Calu3 (cell line): ENCODE measurements at regions of chr6 and their contacts with region 1.

Region 1: GRCh38 chr6:17156112-17156921 is 54.5 kb downstream of the STMND1 start:
- DNase-seq: peak; percentile 64
- H3K4me3 Mint-ChIP-seq: no peak overlapping the region
- H3K27ac Mint-ChIP-seq: no peak overlapping the region
- H3K4me1 Mint-ChIP-seq: no peaks in the 10 kb centered on the region
- H3K27me3 Mint-ChIP-seq: no peaks in the 10 kb centered on the region
- CTCF ChIP-seq: peak; percentile 64

Region 2: DNA sequence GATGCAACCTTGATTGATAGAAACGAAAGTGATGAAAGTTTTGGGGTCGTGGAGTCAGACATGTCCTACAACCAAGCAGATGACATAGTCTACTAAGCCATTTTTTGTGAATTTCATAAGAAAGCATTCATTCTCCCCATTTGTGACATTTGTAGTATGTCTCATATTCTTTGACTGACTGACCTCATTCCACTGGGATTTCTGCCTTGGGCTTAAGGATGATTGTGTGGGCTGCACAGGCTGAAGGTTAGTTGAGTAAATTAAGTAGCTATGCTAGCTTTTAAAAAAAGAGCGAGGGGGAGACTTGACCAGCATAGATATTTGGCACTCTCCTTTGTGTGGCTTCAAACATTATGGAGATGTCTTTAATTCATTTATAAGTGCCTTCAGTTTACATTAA is 25.5 kb before region 1 on chr6:
- CTCF ChIA-PET with region 1: no interaction called
- intact Hi-C with region 1: no loop called
- DNase-seq: no peak
- H3K4me3 Mint-ChIP-seq: no peak overlapping the region
- H3K27ac Mint-ChIP-seq: no peak overlapping the region
- H3K4me1 Mint-ChIP-seq: peaks cover under 1% of the 10 kb centered on the region
- H3K27me3 Mint-ChIP-seq: no peaks in the 10 kb centered on the region
- CTCF ChIP-seq: no peak

Region 3: DNA sequence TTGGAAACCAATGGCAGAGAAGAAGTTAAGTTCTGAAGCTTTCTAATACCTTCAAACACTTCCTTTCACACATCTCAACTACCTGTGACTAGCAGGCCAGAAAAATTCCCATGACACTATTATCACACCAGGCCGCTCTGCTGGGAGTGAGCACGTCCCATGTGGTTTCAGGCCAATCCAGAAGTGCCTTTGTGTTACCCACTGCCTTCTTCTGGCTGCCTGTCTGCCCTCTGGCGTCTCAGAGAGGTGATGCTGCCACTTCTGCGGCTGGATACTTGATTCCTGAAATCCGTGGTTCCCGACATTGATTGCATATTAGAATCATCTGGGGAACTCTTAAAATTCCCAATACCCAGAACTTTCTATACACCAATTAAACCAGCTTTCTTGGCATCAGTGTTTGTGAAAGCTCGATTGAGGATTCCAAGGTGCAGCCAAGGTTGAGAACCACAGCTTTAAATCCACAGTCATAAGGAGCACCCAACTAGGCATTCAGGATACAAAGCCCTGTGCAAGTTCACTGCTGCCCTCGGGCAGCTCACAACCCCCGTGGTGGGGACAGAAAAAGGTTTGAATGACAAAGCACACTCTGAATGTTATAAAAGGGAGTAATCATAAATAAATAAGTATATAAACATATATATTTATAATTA is 11.1 kb after region 1 on chr6:
- CTCF ChIA-PET with region 1: interaction called, 5 read pairs
- intact Hi-C with region 1: loop called (anchors 1 kb)
- DNase-seq: peak; percentile 66
- H3K4me3 Mint-ChIP-seq: no peak overlapping the region
- H3K27ac Mint-ChIP-seq: no peak overlapping the region
- H3K4me1 Mint-ChIP-seq: peaks cover 8% of the 10 kb centered on the region
- H3K27me3 Mint-ChIP-seq: no peaks in the 10 kb centered on the region
- CTCF ChIP-seq: peak; percentile 54

Region 4: DNA sequence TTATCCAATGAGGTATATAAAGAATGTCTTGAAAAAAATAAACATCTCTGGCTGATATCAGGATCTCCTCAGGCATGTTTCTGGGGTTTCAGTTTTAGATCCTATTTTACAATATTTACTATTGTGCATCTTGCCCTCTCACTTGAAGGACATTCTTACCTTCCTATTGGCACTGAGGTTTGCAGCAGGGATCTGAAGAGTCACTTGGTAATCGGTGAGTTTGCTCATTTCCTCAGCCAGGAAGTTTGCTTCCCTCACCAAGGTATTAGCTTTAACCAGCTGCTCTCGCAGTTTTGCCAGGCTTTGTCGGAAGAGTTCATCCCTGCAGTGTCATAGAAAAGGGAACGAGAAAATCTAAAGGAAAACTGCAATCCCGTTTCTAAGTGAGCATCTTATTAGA is 652.3 kb after region 1 on chr6:
- CTCF ChIA-PET with region 1: no interaction called
- intact Hi-C with region 1: loop called (anchors 2 kb)
- DNase-seq: no peak
- H3K4me3 Mint-ChIP-seq: no peak overlapping the region
- H3K27ac Mint-ChIP-seq: no peak overlapping the region
- H3K4me1 Mint-ChIP-seq: no peaks in the 10 kb centered on the region
- H3K27me3 Mint-ChIP-seq: no peaks in the 10 kb centered on the region
- CTCF ChIP-seq: no peak